ENCODE measurements at regions of chr2 and their contacts with region 1.

Region 1: DNA sequence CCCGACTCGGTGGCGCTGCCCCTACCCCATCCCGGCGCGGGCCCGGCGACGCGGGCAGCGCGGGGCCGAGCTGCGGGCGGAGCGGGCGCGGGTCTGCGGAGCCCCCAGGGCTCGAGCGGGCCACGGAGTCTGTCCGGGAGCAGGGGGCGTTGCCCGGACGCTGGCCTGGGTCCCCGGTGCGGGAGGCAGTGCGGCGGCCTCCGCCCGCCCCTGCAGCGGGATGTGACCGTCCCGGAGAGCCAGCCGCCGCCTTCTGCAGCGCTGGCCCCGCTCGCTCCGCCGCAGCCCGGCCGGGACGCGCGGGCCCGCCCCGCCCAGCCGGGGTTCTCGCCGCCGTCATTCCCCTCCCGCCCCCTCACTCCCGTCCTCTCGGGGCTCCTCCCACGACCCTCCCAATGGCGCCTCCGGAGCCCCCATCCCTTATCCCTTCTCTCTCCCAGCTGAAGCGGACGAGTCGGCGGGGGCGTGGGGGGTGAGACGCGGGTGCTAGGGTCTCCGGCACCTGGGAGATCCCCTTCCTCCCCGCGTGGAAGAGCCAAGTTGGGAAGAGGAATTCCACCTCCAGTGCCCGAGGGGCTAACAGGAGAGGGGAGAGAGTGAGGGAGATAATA is at the start of gene FNDC4:
- DNase-seq: no peak
- ATAC-seq: peak; percentile 26
- H3K4me3 ChIP-seq: peak within 1 kb of the TSS; percentile 81 to 85 (median 83)
- H3K27ac ChIP-seq: peak within 1 kb of the TSS; percentile 86
- H3K4me1 ChIP-seq: peaks cover 64% of the 10 kb centered on the region
- H3K27me3 ChIP-seq: no peaks in the 10 kb centered on the region
- CTCF ChIP-seq: no peak
- EP300 ChIP-seq: no peak
- POLR2A ChIP-seq: peak in 1 of 2 experiments; percentile 68; a peak in 2 of 4 replicates
- RAD21 ChIP-seq: peak; percentile 53
- total RNA-seq, gene FNDC4: 7.4 and 9.0 TPM in 2 replicates

Region 2: DNA sequence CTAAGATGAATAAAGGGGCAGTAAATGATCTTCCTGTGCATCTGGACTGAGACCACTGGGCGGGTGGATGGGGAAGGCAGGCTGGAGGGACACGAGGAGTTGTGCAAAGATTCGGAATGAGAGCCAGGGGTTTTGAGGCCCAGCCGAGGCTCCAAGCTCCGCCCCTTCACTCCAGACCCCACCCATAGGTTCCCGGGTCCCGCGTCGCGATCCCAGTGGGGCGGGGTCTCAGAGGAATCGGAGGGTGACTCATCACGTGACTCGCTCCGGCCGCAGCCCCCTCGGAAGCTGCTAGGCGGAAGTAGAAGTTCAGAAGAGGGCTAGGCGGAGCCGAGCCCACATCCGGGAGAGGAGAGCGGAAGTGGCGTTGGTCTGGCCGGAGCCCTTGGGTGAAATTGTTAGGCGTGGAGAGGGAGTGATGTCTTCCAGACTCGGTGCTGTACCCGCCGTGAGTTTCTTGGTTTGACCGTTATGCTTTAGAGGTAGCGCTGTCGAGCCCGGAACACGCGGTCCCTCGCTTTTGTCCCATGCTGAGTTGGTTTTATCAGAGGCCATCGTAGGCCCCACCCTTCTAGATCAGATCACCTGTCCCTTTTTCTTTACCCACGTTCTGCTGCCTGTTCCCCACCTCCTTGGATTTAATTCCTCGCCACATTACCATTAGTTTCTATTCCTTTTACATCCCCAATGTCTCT is 87.8 kb after region 1 on chr2 and contains the start of gene ZNF512:
- CTCF ChIA-PET with region 1: no interaction called
- POLR2A ChIA-PET with region 1: interaction called, 8 read pairs
- in situ Hi-C with region 1: no loop called
- intact Hi-C with region 1: loop called (anchors 5 kb)
- DNase-seq: peak; percentile 96
- ATAC-seq: peak; percentile 98
- H3K4me3 ChIP-seq: peak within 1 kb of the TSS; percentile 69 to 97 (median 87)
- H3K27ac ChIP-seq: peak within 1 kb of the TSS; percentile 57
- H3K4me1 ChIP-seq: peaks cover 50% of the 10 kb centered on the region
- H3K27me3 ChIP-seq: no peaks in the 10 kb centered on the region; a peak in 1 of 5 replicates
- CTCF ChIP-seq: peak; percentile 25; the same call in 1 of the 2 replicates
- EP300 ChIP-seq: no peak; a peak in 1 of 4 replicates
- POLR2A ChIP-seq: peak; percentile 87 to 88
- RAD21 ChIP-seq: 0 out of 2 replicates have a peak, but pooled peaks have one; percentile 41
- total RNA-seq, gene ZNF512: 31.0 and 38.1 TPM in 2 replicates